ENCODE measurements at regions of chr3 and their contacts with region 1.

Region 1: GRCh38 chr3:8987645-8988383 is 24.5 kb upstream of the RAD18 start:
- DNase-seq: peak; percentile 69 to 85 (median 81)
- ATAC-seq: peak; percentile 94
- H3K4me3 ChIP-seq: no peak overlapping the region
- H3K27ac ChIP-seq: no peak overlapping the region
- H3K4me1 ChIP-seq: peaks cover 0 to 8% of the 10 kb centered on the region in 2 experiments; a peak in 2 of 5 replicates
- H3K27me3 ChIP-seq: peaks cover 49 to 81% of the 10 kb centered on the region in 2 experiments
- CTCF ChIP-seq: peak; percentile 85 to 89 (median 88)
- EP300 ChIP-seq: no peak
- POLR2A ChIP-seq: no peak
- RAD21 ChIP-seq: peak; percentile 52 to 77; a peak in 3 of 4 replicates

Region 2: GRCh38 chr3:9485248-9485647 is 497.4 kb after region 1 on chr3:
- CTCF ChIA-PET with region 1: no interaction called
- POLR2A ChIA-PET with region 1: no interaction called
- in situ Hi-C with region 1: no loop called
- intact Hi-C with region 1: loop called (anchors 10 kb)
- DNase-seq: no peak
- ATAC-seq: no peak
- H3K4me3 ChIP-seq: no peak overlapping the region
- H3K27ac ChIP-seq: no peak overlapping the region
- H3K4me1 ChIP-seq: no peaks in the 10 kb centered on the region
- H3K27me3 ChIP-seq: no peaks in the 10 kb centered on the region
- CTCF ChIP-seq: no peak
- EP300 ChIP-seq: no peak
- POLR2A ChIP-seq: no peak
- RAD21 ChIP-seq: no peak

Measured in K562 (cell line).